GM13977 (cell line): ENCODE measurements at regions of chr13 and their contacts with region 1.

Region 1: DNA sequence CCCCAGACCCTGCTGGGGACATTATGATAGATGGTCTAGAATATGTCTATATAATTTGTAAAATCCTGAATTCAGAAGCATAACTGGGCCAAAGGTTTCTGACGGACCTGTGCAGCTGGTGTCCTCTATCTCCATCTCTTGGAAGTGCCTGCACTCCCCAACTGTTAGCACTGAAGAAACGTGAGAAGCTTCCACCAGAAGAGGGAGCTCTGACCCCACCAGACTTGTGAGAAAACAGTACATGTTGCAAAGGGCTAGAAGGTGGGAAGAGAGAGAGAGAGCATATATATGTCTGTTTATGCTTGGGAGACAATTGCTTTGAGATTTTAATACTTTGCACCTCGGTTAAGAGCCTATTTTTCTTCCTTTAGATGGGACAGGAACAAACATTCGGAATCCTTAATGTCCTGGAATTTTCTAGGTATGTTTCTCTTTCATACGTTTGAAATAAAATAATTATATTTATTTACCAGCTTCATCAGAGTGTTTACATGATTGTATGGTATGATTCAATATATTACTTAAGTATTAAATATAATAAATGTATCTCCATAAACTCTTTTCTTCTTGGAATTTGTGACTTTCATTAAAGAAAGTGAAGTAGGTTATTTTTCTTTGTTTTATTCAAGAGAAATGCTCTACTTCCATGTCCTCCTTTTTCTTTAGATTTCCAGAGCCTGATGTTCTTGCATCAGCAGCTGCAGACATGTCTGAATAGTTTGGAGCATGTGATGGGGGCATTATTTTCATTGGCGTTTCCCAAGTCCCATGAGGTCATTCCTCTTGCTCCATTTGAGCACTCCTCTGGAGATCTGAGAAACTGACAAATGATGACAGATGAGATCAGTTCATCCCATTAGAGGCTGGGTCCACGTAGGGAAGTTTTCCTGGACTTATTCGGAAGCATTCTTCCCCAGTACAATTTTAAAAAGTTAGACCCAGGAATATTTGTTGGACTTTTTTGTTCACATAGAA is 202.9 kb downstream of the ATP8A2 start:
- DNase-seq: peak; percentile 39
- CTCF ChIP-seq: peak; percentile 91

Region 2: GRCh38 chr13:25468325-25469168 is 106.2 kb before region 1 on chr13:
- in situ Hi-C with region 1: no loop called
- DNase-seq: peak; percentile 66
- CTCF ChIP-seq: no peak

Region 3: GRCh38 chr13:26037301-26037700 is 462.6 kb after region 1 on chr13:
- in situ Hi-C with region 1: no loop called
- DNase-seq: no peak
- CTCF ChIP-seq: peak; percentile 47

Region 4: DNA sequence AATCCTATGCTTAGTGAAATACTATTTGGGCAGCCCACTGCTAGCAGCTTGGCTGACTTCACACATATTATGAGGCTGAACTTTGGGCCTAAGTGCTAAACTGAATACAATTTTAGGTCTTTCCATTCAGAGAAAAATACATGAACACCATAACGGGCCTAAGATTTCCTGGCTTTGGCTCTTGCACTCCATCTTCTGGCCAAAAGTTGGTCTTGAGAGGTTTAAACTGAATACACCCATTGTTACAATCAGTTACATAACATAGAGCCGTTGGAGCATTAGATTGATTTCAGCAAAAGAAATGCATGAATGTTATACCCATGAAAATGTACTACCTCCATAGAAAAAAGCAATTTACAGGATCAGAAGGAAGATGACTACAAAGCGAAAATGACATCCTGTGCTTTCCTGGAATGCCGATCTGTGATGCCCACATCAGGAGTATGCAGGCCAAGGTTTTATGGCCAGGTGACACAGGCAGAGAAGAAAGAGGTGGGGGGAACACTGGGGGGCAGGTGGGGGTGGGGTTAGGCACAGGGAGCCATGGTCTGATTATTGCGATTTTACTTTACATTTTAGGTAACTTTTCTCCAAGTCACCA is 488.2 kb after region 1 on chr13:
- in situ Hi-C with region 1: loop called (anchors 10 kb)
- DNase-seq: peak; percentile 41
- CTCF ChIP-seq: peak; percentile 49

Region 5: GRCh38 chr13:26965952-26966700 is 1391.4 kb after region 1 on chr13:
- in situ Hi-C with region 1: no loop called
- DNase-seq: no peak
- CTCF ChIP-seq: no peak